Activated naive CD4-positive, alpha-beta T cell treated with anti-CD3 and anti-CD28 coated beads for 36 hours (primary cell): ENCODE measurements at regions of chr1 and their contacts with region 1.

Region 1: DNA sequence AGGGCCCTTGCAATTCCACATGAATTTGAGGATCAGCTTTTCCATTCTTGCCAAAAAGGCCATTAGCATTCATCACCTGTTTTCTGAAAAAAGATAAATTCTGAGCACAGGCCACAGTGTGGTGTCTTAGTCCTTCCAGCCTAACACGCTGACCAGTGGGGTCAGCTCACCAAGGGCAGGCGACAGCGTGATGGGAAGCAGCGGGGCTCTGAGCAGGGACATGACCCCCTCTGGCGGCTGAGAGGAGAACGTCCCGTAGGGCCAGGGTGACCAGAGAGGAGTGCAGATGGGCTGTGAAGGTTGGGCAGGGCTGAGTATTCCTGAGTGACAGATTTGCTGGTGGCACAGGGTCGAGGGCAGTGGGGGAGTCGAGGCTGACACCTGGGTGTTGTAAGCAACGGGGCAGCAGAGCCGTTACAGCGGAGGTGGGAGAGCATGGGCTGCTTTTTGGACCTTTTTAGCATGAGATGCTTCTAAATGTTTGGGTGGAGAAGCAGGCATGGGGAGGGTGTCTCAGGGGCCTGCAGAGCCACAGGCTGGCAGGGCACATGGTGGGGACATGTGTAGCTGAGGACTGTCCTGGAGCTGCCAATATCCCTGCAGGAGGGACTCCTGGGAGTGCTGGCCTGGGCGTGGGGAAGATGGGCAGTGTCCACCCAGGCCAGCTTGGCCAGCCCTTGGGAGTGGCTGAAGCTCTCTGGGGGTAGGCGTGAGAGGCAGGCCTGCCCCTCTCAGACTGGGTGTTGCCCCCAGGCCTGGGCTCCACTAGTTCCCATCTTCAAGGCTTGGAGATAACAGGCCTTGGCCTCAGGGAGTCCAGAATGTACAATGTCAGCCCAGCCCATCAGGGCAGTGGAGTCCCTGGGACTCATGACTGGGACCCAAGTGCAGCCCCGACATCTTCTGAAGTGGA is 8.6 kb upstream of the CALML6 start:
- DNase-seq: peak; percentile 81
- H3K4me3 Mint-ChIP-seq: peak overlapping the region; percentile 5
- H3K27ac Mint-ChIP-seq: peak overlapping the region; percentile 11
- H3K4me1 Mint-ChIP-seq: peaks cover 16% of the 10 kb centered on the region
- H3K27me3 Mint-ChIP-seq: no peaks in the 10 kb centered on the region

Region 2: GRCh38 chr1:1683104-1683905 is 223.1 kb before region 1 on chr1:
- CTCF ChIA-PET with region 1: no interaction called
- intact Hi-C with region 1: no loop called
- DNase-seq: no peak
- H3K4me3 Mint-ChIP-seq: no peak overlapping the region
- H3K27ac Mint-ChIP-seq: no peak overlapping the region
- H3K4me1 Mint-ChIP-seq: peaks cover 30% of the 10 kb centered on the region
- H3K27me3 Mint-ChIP-seq: no peaks in the 10 kb centered on the region

Region 3: GRCh38 chr1:1721201-1721600 is 185.2 kb before region 1 on chr1:
- CTCF ChIA-PET with region 1: no interaction called
- intact Hi-C with region 1: loop called (anchors 5 kb)
- DNase-seq: no peak
- H3K4me3 Mint-ChIP-seq: no peak overlapping the region
- H3K27ac Mint-ChIP-seq: no peak overlapping the region
- H3K4me1 Mint-ChIP-seq: peaks cover 3% of the 10 kb centered on the region
- H3K27me3 Mint-ChIP-seq: no peaks in the 10 kb centered on the region

Region 4: GRCh38 chr1:1777950-1778662 is 128.3 kb before region 1 on chr1 and contains the start of gene NADK:
- CTCF ChIA-PET with region 1: interaction called, 13 read pairs
- intact Hi-C with region 1: loop called (anchors 1 kb)
- DNase-seq: peak; percentile 52
- H3K4me3 Mint-ChIP-seq: peak within 1 kb of the TSS; percentile 82
- H3K27ac Mint-ChIP-seq: peak within 1 kb of the TSS; percentile 81
- H3K4me1 Mint-ChIP-seq: peaks cover 62% of the 10 kb centered on the region
- H3K27me3 Mint-ChIP-seq: no peaks in the 10 kb centered on the region
- total RNA-seq, gene NADK: 42.1 to 43.6 TPM